ENCODE measurements at regions of chr5 and their contacts with region 1.

Region 1: GRCh38 chr5:305050-305449 is 16.5 kb upstream of the AHRR start:
- H3K4me3 ChIP-seq: no peak overlapping the region
- H3K27ac ChIP-seq: no peak overlapping the region
- H3K4me1 ChIP-seq: no peaks in the 10 kb centered on the region
- CTCF ChIP-seq: no peak

Region 2: GRCh38 chr5:337563-338130 is 32.6 kb after region 1 on chr5:
- CTCF ChIA-PET with region 1: no interaction called
- POLR2A ChIA-PET with region 1: interaction called, 11 read pairs
- H3K4me3 ChIP-seq: no peak overlapping the region
- H3K27ac ChIP-seq: no peak overlapping the region
- H3K4me1 ChIP-seq: no peaks in the 10 kb centered on the region
- CTCF ChIP-seq: peak; percentile 57; the same call in 1 of the 2 replicates